Esophagus muscularis mucosa (tissue), 4 donors: ENCODE measurements at regions of chr16 and their contacts with region 1.

Region 1: DNA sequence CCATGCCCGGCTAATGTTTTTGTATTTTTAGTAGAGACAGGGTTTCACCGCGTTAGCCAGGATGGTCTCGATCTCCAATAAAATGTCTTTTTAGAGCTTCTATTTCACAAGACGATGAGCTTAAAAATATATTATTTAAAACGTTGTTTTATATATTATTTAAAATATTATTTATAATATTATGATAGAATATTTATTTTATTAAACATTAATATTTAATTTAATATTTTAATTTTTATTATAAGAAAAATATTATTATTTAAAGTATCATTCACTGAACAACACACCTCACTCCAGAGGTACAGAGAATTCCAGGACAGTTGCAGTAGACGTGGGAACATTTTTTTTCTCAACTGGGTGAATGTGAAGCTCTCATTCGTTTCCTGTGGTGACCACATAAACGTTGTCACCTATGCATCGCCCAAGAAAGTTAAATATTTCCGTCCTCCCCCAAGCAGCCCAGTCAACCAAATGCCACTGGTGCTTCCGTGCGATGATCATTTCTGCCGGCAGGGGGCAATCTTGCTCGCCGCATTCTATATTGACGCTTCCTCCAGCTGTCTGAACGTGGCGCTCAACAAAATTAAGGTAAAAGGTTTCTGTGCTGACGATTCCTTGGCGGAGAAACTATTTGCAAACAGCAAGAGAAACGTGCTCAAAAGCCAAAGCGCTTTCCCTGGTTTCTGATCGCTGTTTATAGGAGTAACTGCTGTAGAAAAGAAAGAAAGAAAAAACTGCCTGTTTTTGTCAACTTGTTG is 41.7 kb upstream of the PRSS54 start:
- DNase-seq: peak; percentile 98
- H3K4me3 ChIP-seq: peak overlapping the region; percentile 29 to 35 (median 34)
- H3K27ac ChIP-seq: no peak overlapping the region
- H3K4me1 ChIP-seq: peaks cover 6 to 17% (median 12%) of the 10 kb centered on the region in 4 donors
- H3K27me3 ChIP-seq: peaks cover 0 to 5% (median 0%) of the 10 kb centered on the region in 4 donors
- CTCF ChIP-seq: peak; percentile 91 to 97 (median 91)
- EP300 ChIP-seq: no peak
- POLR2A ChIP-seq: no peak

Region 2: GRCh38 chr16:58487566-58488351 is 151.2 kb after region 1 on chr16:
- intact Hi-C with region 1: loop called (anchors 1 kb)
- DNase-seq: no peak
- H3K4me3 ChIP-seq: peak overlapping the region; percentile 31 to 45 (median 36)
- H3K27ac ChIP-seq: no peak overlapping the region
- H3K4me1 ChIP-seq: peaks cover 10 to 32% (median 14%) of the 10 kb centered on the region in 4 donors
- H3K27me3 ChIP-seq: no peaks in the 10 kb centered on the region
- CTCF ChIP-seq: peak in 2 of 3 experiments; percentile 85 to 93
- EP300 ChIP-seq: no peak
- POLR2A ChIP-seq: no peak

Region 3: GRCh38 chr16:58661199-58661830 is 324.8 kb after region 1 on chr16:
- intact Hi-C with region 1: loop called (anchors 5 kb)
- DNase-seq: no peak
- H3K4me3 ChIP-seq: no peak overlapping the region
- H3K27ac ChIP-seq: no peak overlapping the region
- H3K4me1 ChIP-seq: peaks cover 0 to 6% (median 0%) of the 10 kb centered on the region in 4 donors
- H3K27me3 ChIP-seq: no peaks in the 10 kb centered on the region
- CTCF ChIP-seq: peak; percentile 48 to 62 (median 60)
- EP300 ChIP-seq: no peak
- POLR2A ChIP-seq: no peak